ENCODE measurements at regions of chr4 and their contacts with region 1.

Region 1: GRCh38 chr4:10743357-10743756 is 58.8 kb upstream of the CLNK start:
- DNase-seq: no peak
- ATAC-seq: peak; percentile 83
- H3K4me3 Mint-ChIP-seq: no peak overlapping the region
- H3K27ac Mint-ChIP-seq: no peak overlapping the region
- H3K4me1 Mint-ChIP-seq: peaks cover 18% of the 10 kb centered on the region
- H3K27me3 Mint-ChIP-seq: no peaks in the 10 kb centered on the region
- CTCF ChIP-seq: no peak

Region 2: GRCh38 chr4:10690185-10690907 is 53.0 kb before region 1 on chr4:
- CTCF ChIA-PET with region 1: no interaction called
- POLR2A ChIA-PET with region 1: no interaction called
- intact Hi-C with region 1: loop called (anchors 2 kb)
- DNase-seq: no peak
- ATAC-seq: peak; percentile 47
- H3K4me3 Mint-ChIP-seq: peak overlapping the region; percentile 50
- H3K27ac Mint-ChIP-seq: peak overlapping the region; percentile 69
- H3K4me1 Mint-ChIP-seq: peaks cover 44% of the 10 kb centered on the region
- H3K27me3 Mint-ChIP-seq: no peaks in the 10 kb centered on the region
- CTCF ChIP-seq: no peak

Region 3: DNA sequence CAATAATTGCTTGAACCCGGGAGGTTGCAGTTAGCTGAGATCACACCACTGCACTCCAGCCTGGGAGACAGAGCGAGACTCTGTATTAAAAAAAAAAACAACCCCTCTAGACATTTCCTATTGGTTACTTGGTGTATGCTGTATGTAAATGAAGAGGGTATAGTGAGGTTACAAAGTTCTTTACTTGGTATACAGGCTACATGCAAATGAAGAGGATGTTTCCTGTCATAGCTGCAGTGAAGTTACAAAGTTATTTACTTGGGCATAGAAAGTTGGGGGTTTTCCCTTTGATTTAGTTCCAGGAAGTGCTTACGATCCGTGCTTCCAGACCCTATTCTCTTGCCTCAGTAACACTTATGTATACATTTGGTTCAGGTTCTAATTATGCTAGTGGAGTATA is 20.4 kb before region 1 on chr4:
- CTCF ChIA-PET with region 1: no interaction called
- POLR2A ChIA-PET with region 1: no interaction called
- intact Hi-C with region 1: loop called (anchors 2 kb)
- DNase-seq: no peak
- ATAC-seq: peak; percentile 83
- H3K4me3 Mint-ChIP-seq: no peak overlapping the region
- H3K27ac Mint-ChIP-seq: peak overlapping the region; percentile 30
- H3K4me1 Mint-ChIP-seq: peaks cover 43% of the 10 kb centered on the region
- H3K27me3 Mint-ChIP-seq: no peaks in the 10 kb centered on the region
- CTCF ChIP-seq: no peak

Region 4: DNA sequence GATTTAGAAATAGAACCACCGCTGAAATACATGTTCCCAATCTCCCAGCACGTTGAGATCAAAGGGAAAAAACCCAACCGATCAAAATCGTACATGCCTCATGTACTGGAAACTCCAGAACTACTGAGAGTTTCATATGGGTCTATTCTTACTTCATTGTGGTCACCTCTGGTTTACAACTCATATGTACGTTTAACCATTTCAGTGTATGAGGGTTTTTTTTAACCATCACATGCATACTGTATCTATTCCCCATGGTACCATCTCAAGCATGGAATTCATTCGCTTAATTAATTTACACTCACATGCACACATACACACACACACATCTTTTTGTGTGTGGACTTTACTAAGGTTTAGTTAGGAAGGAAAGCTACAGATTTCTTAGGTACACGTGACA is 12.8 kb before region 1 on chr4:
- CTCF ChIA-PET with region 1: no interaction called
- POLR2A ChIA-PET with region 1: interaction called, 3 read pairs
- intact Hi-C with region 1: loop called (anchors 1 kb)
- DNase-seq: no peak
- ATAC-seq: no peak
- H3K4me3 Mint-ChIP-seq: no peak overlapping the region
- H3K27ac Mint-ChIP-seq: no peak overlapping the region
- H3K4me1 Mint-ChIP-seq: peaks cover 65% of the 10 kb centered on the region
- H3K27me3 Mint-ChIP-seq: no peaks in the 10 kb centered on the region
- CTCF ChIP-seq: no peak

Region 5: GRCh38 chr4:10808591-10808990 is 65.2 kb after region 1 on chr4:
- CTCF ChIA-PET with region 1: no interaction called
- POLR2A ChIA-PET with region 1: no interaction called
- intact Hi-C with region 1: no loop called
- DNase-seq: no peak
- ATAC-seq: no peak
- H3K4me3 Mint-ChIP-seq: no peak overlapping the region
- H3K27ac Mint-ChIP-seq: no peak overlapping the region
- H3K4me1 Mint-ChIP-seq: peaks cover 7% of the 10 kb centered on the region
- H3K27me3 Mint-ChIP-seq: peaks cover 2% of the 10 kb centered on the region
- CTCF ChIP-seq: no peak

Region 6: GRCh38 chr4:10977534-10977933 is 234.2 kb after region 1 on chr4:
- CTCF ChIA-PET with region 1: no interaction called
- POLR2A ChIA-PET with region 1: no interaction called
- intact Hi-C with region 1: loop called (anchors 10 kb)
- DNase-seq: no peak
- ATAC-seq: peak; percentile 85
- H3K4me3 Mint-ChIP-seq: peak overlapping the region; percentile 37
- H3K27ac Mint-ChIP-seq: no peak overlapping the region
- H3K4me1 Mint-ChIP-seq: peaks cover 39% of the 10 kb centered on the region
- H3K27me3 Mint-ChIP-seq: no peaks in the 10 kb centered on the region
- CTCF ChIP-seq: no peak

Region 7: DNA sequence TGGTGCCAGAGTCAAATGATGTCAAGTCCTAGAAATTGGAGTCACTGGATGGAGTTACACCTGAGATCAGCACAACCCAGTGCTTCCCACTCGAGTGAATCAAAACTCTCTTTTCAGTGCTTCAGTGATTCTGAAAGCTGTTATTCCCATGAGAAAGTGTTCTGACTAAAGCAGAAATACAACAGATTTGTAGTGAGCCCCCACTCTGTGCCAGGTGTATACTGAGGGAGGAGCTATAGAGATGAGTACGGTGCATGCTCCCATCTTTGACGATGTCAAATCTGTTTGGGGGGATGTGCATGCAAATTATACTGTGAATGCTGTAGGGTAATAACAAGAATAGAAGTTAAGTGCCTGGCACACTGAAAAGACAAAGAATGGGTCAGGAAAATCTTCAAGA is 355.1 kb after region 1 on chr4:
- CTCF ChIA-PET with region 1: no interaction called
- POLR2A ChIA-PET with region 1: no interaction called
- intact Hi-C with region 1: loop called (anchors 10 kb)
- DNase-seq: no peak
- ATAC-seq: peak; percentile 70
- H3K4me3 Mint-ChIP-seq: peak overlapping the region; percentile 57
- H3K27ac Mint-ChIP-seq: peak overlapping the region; percentile 68
- H3K4me1 Mint-ChIP-seq: peaks cover 73% of the 10 kb centered on the region
- H3K27me3 Mint-ChIP-seq: no peaks in the 10 kb centered on the region
- CTCF ChIP-seq: no peak